Dendritic cell treated with granulocyte-macrophage colony-stimulating factor and Interleukin-4, amounts not matched to agents 40 ng/mL and 50 ng/mL, for 4 days (primary cell): ENCODE measurements at regions of chr4 and their contacts with region 1.

Region 1: GRCh38 chr4:44678094-44679041 is at the start of gene GUF1:
- H3K4me3 Mint-ChIP-seq: peak within 1 kb of the TSS; percentile 88
- H3K27ac Mint-ChIP-seq: peak within 1 kb of the TSS; percentile 98
- H3K4me1 Mint-ChIP-seq: peaks cover 10% of the 10 kb centered on the region
- H3K27me3 Mint-ChIP-seq: peaks cover 7% of the 10 kb centered on the region

Region 2: DNA sequence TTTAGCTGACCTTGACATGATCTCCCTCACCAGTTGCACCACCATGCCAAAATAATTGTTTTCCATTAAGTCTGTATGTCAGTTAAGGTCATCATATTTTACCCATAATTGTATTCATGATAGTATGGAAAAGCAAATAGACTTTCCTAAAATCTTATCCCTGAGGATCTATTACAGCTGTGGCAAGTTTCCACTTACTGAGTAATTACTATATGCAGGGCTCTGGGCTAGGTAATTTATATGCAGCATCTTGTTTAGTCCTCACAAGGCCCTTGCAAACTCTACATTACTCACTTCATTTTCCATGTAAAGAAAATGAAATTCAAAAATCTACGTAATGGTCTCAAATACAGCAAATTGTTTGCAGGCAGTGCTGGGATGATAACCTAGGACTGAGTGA is 61.7 kb before region 1 on chr4:
- intact Hi-C with region 1: no loop called
- H3K4me3 Mint-ChIP-seq: no peak overlapping the region
- H3K27ac Mint-ChIP-seq: no peak overlapping the region
- H3K4me1 Mint-ChIP-seq: no peaks in the 10 kb centered on the region
- H3K27me3 Mint-ChIP-seq: no peaks in the 10 kb centered on the region

Region 3: GRCh38 chr4:44638091-44638490 is 40.3 kb before region 1 on chr4:
- intact Hi-C with region 1: no loop called
- H3K4me3 Mint-ChIP-seq: no peak overlapping the region
- H3K27ac Mint-ChIP-seq: no peak overlapping the region
- H3K4me1 Mint-ChIP-seq: no peaks in the 10 kb centered on the region
- H3K27me3 Mint-ChIP-seq: no peaks in the 10 kb centered on the region

Region 4: DNA sequence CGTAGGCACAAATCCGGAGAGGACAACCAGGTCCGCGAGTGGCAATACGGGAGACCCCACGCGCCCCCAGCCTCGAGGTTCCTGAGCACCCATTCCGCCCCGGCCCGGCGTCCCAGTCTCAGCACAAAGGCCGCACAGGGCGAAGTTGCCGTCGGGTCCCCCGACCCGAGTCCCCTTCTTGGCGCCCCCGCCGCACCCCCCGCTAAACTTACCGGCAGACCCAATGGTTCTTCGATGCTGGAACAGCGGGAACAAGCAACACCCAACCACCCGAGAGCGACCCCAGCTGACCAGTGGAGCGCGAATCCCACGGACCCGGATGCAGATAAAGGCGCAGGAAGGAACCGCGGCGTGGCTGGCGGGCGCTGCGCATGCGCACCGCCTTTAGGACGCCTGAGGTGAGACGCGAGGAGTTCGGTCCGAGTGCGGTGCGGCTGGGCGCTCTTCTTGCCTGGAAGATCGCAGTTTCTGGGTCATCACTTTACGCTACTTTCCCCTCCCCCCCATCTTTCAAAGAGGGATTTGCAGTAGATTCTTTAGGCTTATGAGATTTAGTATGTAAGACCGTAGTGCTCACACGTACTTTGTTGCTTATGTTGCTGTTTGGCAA is 48.0 kb after region 1 on chr4 and contains the start of gene GNPDA2:
- intact Hi-C with region 1: loop called (anchors 2 kb)
- H3K4me3 Mint-ChIP-seq: peak within 1 kb of the TSS; percentile 90
- H3K27ac Mint-ChIP-seq: peak within 1 kb of the TSS; percentile 78
- H3K4me1 Mint-ChIP-seq: peaks cover 16% of the 10 kb centered on the region
- H3K27me3 Mint-ChIP-seq: peaks cover 6% of the 10 kb centered on the region

Region 5: DNA sequence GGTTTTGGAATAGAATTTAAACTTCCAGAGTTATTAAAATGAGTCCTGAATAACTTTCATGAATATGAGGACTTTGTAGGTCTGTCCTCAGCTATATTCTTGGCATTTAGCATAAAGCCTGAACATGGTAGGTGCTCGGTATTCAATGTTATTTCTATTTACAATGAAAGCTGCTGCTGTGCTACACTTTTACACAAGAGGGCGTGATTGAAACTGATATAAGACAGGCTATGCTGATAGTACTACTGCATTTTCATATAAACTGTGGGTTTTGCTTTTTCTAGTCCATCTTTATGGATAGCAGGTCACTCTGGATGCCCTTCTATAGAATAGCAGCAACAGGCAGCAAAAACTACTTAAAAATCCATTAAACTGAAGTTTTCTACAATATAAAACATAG is 60.2 kb after region 1 on chr4:
- intact Hi-C with region 1: no loop called
- H3K4me3 Mint-ChIP-seq: no peak overlapping the region
- H3K27ac Mint-ChIP-seq: no peak overlapping the region
- H3K4me1 Mint-ChIP-seq: no peaks in the 10 kb centered on the region
- H3K27me3 Mint-ChIP-seq: peaks cover 2% of the 10 kb centered on the region